ENCODE measurements at regions of chr1 and their contacts with region 1.

Region 1: DNA sequence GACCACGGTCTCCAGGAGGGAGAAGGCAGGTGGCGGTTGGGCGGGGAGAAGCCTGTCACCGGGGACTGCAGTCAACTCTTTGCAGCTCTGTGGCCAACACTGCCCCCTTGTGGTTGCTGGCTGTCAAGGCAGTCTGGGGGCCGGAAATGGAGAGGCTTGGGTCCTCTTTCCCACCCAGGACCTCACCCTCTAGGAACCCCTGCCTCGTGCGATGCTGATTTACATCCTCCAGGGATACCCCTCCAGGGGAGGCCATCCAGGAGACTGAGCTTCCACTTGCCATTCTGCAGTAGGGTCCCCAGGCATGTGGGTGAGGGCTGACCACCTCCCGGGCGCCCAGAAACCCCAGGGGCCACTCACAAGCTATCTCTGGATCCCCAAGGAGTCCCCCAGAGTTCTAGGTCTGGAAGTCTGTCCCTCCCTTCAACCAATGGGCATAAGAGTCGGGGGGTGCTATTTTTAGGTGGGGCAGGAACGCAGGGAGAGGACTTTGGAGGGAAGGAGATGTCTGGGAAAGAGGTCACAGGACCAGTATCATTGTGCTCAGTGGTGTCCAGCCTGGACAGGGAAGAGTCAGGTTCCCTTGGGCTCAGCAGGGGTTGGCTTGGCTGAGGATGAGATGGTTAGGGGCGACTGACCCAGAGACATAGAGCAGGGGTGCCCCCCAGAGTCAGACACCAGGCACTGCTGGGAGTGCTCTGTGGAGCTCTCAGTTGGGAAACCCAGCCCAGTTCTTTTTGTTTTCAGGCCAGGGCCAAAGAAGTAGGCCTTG is 7.1 kb upstream of the GPR61 start:
- DNase-seq: peak; percentile 88 to 91 (median 90)
- ATAC-seq: peak; percentile 92
- H3K4me3 ChIP-seq: no peak overlapping the region
- H3K27ac ChIP-seq: peak overlapping the region; percentile 63; the same call in 2 of the 3 replicates
- H3K4me1 ChIP-seq: peaks cover 9 to 14% of the 10 kb centered on the region in 2 experiments; a peak in 4 of 5 replicates
- H3K27me3 ChIP-seq: peaks cover 5 to 14% of the 10 kb centered on the region in 2 experiments
- CTCF ChIP-seq: peak; percentile 97 to 99 (median 97)
- EP300 ChIP-seq: no peak
- POLR2A ChIP-seq: no peak
- RAD21 ChIP-seq: peak; percentile 92 to 98

Region 2: DNA sequence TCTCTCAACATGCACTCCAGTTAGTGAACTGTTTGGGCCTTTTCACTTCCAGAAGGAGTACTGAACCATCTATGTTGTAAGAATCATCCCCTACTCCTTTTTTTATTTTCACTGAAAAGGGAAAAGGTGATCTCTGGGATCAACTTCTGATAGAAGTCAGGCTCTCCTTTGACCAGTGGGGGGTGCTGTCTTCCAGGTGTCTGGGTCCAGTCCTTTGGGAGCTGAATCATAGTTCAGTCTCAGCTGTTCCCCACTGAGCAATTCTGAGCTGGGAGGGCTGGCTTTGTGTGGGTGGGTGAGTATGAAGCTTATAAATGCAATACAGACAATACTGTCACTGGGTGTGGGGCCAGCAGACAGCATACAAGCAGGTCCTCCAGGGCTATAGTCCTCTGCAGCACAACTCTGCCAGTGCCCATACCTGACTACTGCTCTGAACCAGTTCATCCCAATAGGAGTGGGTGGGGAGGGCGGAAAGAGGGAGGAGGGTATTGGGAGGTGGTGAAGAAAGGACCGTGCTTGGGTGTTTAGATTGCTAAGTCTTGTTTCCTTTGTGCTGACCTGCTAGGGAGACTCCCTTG is 331.3 kb before region 1 on chr1:
- CTCF ChIA-PET with region 1: interaction called, 13 read pairs
- POLR2A ChIA-PET with region 1: no interaction called
- in situ Hi-C with region 1: no loop called
- intact Hi-C with region 1: loop called (anchors 1 kb)
- DNase-seq: peak; percentile 91 to 93 (median 92)
- ATAC-seq: peak; percentile 85
- H3K4me3 ChIP-seq: no peak overlapping the region
- H3K27ac ChIP-seq: no peak overlapping the region
- H3K4me1 ChIP-seq: peaks cover 22 to 39% of the 10 kb centered on the region in 2 experiments
- H3K27me3 ChIP-seq: no peaks in the 10 kb centered on the region
- CTCF ChIP-seq: peak; percentile 87 to 98 (median 97)
- EP300 ChIP-seq: no peak
- POLR2A ChIP-seq: no peak
- RAD21 ChIP-seq: peak; percentile 88 to 92

Region 3: GRCh38 chr1:109277434-109278204 is 254.9 kb before region 1 on chr1:
- CTCF ChIA-PET with region 1: no interaction called
- POLR2A ChIA-PET with region 1: interaction called, 4 read pairs
- in situ Hi-C with region 1: no loop called
- intact Hi-C with region 1: loop called (anchors 1 kb)
- DNase-seq: peak; percentile 91 to 94 (median 92)
- ATAC-seq: peak; percentile 90
- H3K4me3 ChIP-seq: no peak overlapping the region
- H3K27ac ChIP-seq: peak overlapping the region; percentile 51
- H3K4me1 ChIP-seq: peaks cover 63 to 65% of the 10 kb centered on the region in 2 experiments
- H3K27me3 ChIP-seq: no peaks in the 10 kb centered on the region
- CTCF ChIP-seq: peak; percentile 95 to 99 (median 97)
- EP300 ChIP-seq: no peak; the same call in 1 of the 2 replicates
- POLR2A ChIP-seq: no peak
- RAD21 ChIP-seq: peak; percentile 89 to 98

Region 4: DNA sequence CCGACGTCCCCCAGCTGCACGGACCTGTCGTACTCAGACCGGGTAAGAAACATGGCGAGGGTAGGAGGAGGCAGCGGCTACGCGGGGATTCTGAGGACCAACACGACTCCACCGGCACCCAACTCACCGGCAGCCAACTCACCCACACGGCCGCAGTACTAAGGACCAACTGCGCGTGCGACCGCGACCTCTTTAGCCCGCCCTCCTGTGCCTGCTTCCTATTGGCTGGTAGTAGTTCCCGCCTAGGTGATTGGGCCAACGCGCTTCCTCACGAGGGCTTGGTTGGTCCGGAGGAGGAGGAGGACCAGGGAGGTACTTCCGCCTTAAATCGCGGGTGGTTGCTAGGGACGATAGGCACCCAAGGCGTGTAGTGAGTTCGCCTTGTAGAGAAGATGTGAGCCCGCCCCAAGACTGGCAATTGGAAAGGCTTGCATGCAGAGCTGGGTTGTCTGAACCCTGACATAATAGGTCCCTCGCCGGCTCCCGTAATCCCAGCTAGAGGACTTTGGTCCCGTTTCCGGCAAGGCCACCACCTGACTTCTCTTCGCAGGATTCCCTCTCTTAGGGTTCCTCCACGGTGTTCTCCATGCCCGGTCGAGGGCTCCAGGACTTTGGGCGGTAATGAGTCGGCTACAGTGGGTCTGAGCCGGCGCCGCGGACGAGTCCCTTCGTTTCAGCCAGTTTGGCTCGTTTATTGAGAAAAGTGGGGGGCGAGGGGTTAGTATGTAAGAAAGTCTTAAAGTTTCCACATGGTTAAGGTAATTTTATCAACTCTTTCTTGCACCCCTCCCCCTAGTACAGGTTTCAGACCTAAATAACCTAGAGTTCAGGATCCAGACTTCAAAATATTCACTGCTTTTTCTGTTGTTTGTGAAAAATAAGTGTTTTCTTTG is 106.0 kb before region 1 on chr1 and contains the start of gene PSMA5:
- CTCF ChIA-PET with region 1: interaction called, 3 read pairs
- POLR2A ChIA-PET with region 1: interaction called, 10 read pairs
- in situ Hi-C with region 1: no loop called
- intact Hi-C with region 1: loop called (anchors 5 kb)
- DNase-seq: peak; percentile 98 to 100 (median 99)
- ATAC-seq: peak; percentile 98
- H3K4me3 ChIP-seq: peak within 1 kb of the TSS; percentile 60
- H3K27ac ChIP-seq: peak within 1 kb of the TSS; percentile 87
- H3K4me1 ChIP-seq: peaks cover 18 to 23% of the 10 kb centered on the region in 2 experiments; a peak in 4 of 5 replicates
- H3K27me3 ChIP-seq: no peaks in the 10 kb centered on the region
- CTCF ChIP-seq: no peak
- EP300 ChIP-seq: no peak
- POLR2A ChIP-seq: peak; percentile 99
- RAD21 ChIP-seq: no peak
- polyA plus RNA-seq, gene PSMA5: 451 to 542 TPM

Region 5: DNA sequence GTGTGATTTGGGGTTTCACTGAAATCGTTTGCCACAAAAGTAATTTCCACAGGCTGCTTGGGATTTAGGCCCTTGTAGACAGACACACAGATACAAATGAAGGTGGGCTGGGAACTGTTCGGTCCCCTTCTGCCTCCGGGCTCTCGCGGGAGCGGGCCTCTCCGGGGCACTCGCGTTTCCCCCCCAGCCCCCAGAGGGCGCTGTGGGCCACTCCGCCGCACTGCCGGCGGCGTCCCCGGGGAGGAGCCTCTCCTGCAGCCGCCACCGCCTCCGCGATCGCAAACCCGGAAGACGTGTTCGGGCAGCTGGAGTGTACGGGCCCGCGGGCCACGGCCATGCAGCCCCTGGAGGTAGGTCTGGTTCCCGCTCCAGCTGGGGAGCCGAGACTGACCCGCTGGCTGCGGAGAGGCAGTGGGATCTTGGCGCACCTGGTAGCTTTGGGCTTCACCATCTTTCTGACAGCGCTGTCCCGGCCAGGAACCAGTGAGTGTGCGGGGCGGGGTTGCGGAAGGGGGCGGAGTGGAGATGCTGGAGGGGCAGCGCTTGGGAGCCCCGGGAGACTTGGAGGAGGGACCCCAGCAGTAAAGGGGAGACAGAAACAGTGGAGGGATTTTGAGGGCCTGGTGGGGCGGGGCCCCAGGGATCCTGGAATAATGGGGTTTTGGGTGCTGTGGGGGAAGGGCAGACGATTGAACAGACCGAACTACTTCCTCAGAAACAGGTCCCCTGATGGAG is 38.6 kb before region 1 on chr1 and contains the start of gene CYB561D1:
- CTCF ChIA-PET with region 1: interaction called, 131 read pairs
- POLR2A ChIA-PET with region 1: interaction called, 17 read pairs
- in situ Hi-C with region 1: loop called (anchors 5 kb)
- intact Hi-C with region 1: loop called (anchors 1 kb)
- DNase-seq: peak; percentile 93 to 95 (median 94)
- ATAC-seq: peak; percentile 96
- H3K4me3 ChIP-seq: peak within 1 kb of the TSS; percentile 91
- H3K27ac ChIP-seq: peak within 1 kb of the TSS; percentile 51
- H3K4me1 ChIP-seq: peaks cover 13 to 30% of the 10 kb centered on the region in 2 experiments; a peak in 4 of 5 replicates
- H3K27me3 ChIP-seq: no peaks in the 10 kb centered on the region
- CTCF ChIP-seq: peak; percentile 97 to 98 (median 97)
- EP300 ChIP-seq: no peak
- POLR2A ChIP-seq: peak; percentile 88
- RAD21 ChIP-seq: peak; percentile 76 to 80
- polyA plus RNA-seq, gene CYB561D1: 0.71 to 0.72 TPM

Region 6: DNA sequence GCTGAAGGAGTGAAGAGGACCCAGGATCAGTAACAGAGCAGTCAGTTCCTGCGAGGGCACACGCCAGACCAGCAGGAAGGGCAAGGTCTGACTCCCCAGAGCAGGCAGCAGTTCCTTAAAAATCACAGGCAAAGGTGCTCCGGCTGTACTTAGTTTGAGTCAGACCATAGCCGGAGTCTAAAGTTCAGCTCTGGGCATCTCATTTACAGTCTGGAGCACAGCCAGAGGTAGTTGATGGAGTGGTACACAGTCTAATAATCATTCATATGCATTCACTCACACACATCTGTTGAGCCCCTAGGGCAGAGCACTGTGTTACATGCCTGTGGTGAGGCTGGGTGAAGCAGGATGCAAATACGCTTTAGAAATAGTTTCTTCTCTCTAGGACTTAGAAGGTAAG is 15.7 kb before region 1 on chr1:
- CTCF ChIA-PET with region 1: no interaction called
- POLR2A ChIA-PET with region 1: interaction called, 11 read pairs
- in situ Hi-C with region 1: no loop called
- intact Hi-C with region 1: no loop called
- DNase-seq: no peak
- ATAC-seq: no peak
- H3K4me3 ChIP-seq: no peak overlapping the region
- H3K27ac ChIP-seq: no peak overlapping the region
- H3K4me1 ChIP-seq: no peaks in the 10 kb centered on the region; a peak in 1 of 5 replicates
- H3K27me3 ChIP-seq: peaks cover 18 to 21% of the 10 kb centered on the region in 2 experiments
- CTCF ChIP-seq: no peak
- EP300 ChIP-seq: no peak
- POLR2A ChIP-seq: no peak
- RAD21 ChIP-seq: no peak

Region 7: DNA sequence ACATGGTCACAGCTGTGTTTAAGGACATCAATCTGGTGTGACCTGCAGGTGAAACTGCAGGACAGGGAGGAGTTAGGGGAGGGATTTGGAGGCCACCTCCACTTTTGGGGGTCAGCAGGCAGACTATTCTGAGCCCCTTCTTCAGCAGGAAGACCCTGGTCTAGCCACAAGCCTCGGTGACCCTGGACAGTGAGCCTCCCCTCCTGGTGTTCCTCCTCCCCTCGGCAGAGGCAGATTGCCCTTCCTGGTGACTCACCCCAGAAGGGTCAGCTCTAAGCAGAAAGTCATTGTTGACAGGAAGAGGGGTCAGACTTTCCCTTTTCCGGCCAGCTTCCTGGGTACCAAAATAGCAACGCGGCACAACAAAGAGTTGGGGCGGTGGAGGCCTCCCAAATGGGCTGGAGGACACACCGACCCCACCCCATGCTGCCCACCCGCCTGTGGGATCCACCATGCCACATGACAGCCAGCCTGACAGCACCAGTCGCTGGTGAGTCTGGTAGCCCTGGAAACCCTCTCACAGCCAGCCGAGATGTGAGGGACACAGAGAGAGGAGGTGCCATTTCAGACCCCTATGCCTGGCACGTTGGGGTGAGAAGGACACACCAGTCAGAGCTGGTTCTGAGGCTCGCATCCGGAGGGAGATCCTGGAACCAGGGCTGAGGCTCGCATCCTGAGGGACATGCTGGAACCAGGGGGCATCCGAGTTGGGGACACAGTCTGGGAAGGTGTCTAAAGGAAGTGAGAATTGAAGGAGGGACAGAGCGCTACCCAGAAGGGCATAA is 363.4 kb after region 1 on chr1:
- CTCF ChIA-PET with region 1: no interaction called
- POLR2A ChIA-PET with region 1: no interaction called
- in situ Hi-C with region 1: no loop called
- intact Hi-C with region 1: no loop called
- DNase-seq: peak; percentile 80 to 91 (median 86)
- ATAC-seq: peak; percentile 92
- H3K4me3 ChIP-seq: peak overlapping the region; percentile 34
- H3K27ac ChIP-seq: peak overlapping the region; percentile 91
- H3K4me1 ChIP-seq: peaks cover 22 to 61% of the 10 kb centered on the region in 2 experiments
- H3K27me3 ChIP-seq: no peaks in the 10 kb centered on the region
- CTCF ChIP-seq: no peak
- EP300 ChIP-seq: peak; percentile 91
- POLR2A ChIP-seq: no peak; the same call in 1 of the 2 replicates
- RAD21 ChIP-seq: peak in 1 of 2 experiments; percentile 31; a peak in 2 of 4 replicates

Measured in K562 (cell line).